Activated CD4-positive, alpha-beta T cell treated with anti-CD3 and anti-CD28 coated beads, Interleukin-2, amount 10 ng/mL, durations not matched to agents 24 days and 14 days (primary cell): ENCODE measurements at regions of chr3 and their contacts with region 1.

Region 1: DNA sequence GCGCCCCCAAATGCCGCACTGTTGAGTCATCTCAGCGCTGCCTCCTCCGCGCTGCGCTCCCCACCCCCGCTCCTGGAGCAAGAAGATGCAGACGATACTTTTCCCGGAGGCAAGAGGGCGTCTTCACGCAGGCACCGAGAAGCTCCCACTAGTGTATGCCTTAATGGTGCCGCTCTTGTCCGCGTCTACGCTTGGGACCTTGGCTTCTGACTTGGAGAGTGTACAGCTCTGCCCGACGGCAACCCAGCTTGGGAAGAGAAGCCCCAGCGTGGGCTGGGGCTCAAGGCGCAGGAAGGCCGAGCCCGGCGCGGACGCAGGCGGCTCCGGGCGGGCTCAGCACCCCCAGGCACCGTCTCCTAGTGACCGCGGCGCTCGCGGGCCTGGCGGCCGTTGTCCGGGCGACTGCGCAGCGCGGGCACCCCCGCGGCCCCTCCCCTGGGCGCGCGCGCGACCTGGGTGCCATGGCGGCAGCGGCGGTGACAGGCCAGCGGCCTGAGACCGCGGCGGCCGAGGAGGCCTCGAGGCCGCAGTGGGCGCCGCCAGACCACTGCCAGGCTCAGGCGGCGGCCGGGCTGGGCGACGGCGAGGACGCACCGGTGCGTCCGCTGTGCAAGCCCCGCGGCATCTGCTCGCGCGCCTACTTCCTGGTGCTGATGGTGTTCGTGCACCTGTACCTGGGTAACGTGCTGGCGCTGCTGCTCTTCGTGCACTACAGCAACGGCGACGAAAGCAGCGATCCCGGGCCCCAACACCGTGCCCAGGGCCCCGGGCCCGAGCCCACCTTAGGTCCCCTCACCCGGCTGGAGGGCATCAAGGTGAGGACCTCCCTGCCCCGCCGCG is at the start of gene P4HTM:
- DNase-seq: peak; percentile 91
- H3K4me3 Mint-ChIP-seq: peak within 1 kb of the TSS; percentile 96
- H3K27ac Mint-ChIP-seq: peak within 1 kb of the TSS; percentile 95
- H3K4me1 Mint-ChIP-seq: peaks cover 36% of the 10 kb centered on the region
- H3K27me3 Mint-ChIP-seq: no peaks in the 10 kb centered on the region
- total RNA-seq, gene P4HTM: 33.9 and 38.3 TPM in 2 replicates

Region 2: GRCh38 chr3:48918388-48919214 is 71.4 kb before region 1 on chr3 and contains the start of gene ARIH2:
- intact Hi-C with region 1: loop called (anchors 1 kb)
- DNase-seq: peak; percentile 97
- H3K4me3 Mint-ChIP-seq: peak within 1 kb of the TSS; percentile 91
- H3K27ac Mint-ChIP-seq: peak within 1 kb of the TSS; percentile 97
- H3K4me1 Mint-ChIP-seq: peaks cover 22% of the 10 kb centered on the region
- H3K27me3 Mint-ChIP-seq: no peaks in the 10 kb centered on the region
- total RNA-seq, gene ARIH2: 157 TPM in 2 replicates

Region 3: DNA sequence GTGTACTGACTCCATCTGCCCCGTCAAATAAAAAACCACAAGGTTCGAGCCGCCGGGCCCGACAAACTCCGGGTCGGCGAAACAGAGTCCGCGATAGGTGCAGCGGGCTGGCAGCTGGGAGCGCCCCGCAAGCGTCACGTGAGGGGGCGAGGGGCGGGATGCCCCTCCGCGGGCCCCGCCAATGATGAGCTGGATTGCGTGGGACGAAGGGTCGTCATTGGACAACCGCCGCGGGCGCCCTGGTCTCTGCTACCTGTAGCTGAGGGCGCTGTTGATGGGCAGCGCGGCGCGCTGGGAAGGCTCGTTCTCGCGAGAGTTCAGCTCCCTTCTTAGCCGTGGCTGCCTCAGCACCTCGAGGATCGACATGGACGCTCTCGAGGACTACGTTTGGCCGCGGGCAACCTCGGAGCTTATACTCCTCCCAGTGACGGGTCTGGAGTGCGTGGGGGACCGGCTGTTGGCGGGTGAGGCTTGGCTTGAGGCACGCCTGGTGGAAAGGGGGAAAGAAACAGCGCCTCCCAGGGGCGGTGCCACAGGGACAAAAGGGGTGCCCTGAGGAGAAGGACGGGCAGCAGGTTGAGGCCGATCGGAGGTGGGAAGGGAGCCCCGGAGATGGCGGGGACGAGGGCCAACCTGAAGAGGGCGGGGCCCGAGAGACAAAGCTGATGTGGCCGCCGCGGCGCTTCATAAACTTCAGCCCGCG is 17.2 kb after region 1 on chr3 and contains the start of gene WDR6:
- intact Hi-C with region 1: loop called (anchors 1 kb)
- DNase-seq: peak; percentile 99
- H3K4me3 Mint-ChIP-seq: peak within 1 kb of the TSS; percentile 94
- H3K27ac Mint-ChIP-seq: peak within 1 kb of the TSS; percentile 99
- H3K4me1 Mint-ChIP-seq: peaks cover 27% of the 10 kb centered on the region
- H3K27me3 Mint-ChIP-seq: no peaks in the 10 kb centered on the region
- total RNA-seq, gene WDR6: 141 and 153 TPM in 2 replicates

Region 4: DNA sequence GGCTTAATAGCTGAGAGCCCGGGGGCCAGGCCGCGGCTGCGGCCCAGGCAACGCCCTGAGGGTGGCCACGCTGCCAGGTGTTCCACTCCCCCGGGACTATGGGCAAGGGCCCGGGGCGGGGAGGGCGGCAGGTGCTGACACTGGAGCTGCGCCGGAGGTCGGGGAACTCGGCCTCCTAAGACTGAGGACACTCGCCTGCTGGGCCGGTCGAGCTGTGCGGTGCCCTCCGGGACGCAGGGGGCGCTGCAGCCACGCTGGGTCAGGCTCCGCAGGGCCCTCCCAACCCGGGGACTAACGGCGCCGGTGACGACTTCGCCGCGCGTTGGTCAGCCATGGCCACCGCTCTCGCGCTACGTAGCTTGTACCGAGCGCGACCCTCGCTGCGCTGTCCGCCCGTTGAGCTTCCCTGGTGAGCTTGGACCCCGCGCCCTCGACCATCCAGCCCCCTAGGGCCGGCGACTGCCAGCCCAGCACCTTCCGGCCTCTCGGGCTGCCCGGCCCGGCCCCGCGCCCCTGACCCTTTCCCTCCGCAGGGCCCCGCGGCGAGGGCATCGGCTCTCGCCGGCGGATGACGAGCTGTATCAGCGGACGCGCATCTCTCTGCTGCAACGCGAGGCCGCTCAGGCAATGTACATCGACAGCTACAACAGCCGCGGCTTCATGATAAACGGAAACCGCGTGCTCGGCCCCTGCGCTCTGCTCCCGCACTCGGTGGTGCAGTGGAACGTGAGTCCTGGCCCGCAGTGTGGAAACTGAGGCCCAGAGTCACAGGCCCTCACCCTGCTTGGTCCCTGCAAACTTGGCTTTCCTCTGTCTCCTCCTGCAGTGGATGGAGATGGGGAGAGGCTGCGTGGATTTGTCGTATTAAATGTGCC is 32.0 kb after region 1 on chr3 and contains the start of gene NDUFAF3:
- intact Hi-C with region 1: loop called (anchors 1 kb)
- DNase-seq: peak; percentile 98
- H3K4me3 Mint-ChIP-seq: peak within 1 kb of the TSS; percentile 96
- H3K27ac Mint-ChIP-seq: peak within 1 kb of the TSS; percentile 98
- H3K4me1 Mint-ChIP-seq: peaks cover 35% of the 10 kb centered on the region
- H3K27me3 Mint-ChIP-seq: no peaks in the 10 kb centered on the region
- total RNA-seq, gene NDUFAF3: 123 and 126 TPM in 2 replicates

Region 5: DNA sequence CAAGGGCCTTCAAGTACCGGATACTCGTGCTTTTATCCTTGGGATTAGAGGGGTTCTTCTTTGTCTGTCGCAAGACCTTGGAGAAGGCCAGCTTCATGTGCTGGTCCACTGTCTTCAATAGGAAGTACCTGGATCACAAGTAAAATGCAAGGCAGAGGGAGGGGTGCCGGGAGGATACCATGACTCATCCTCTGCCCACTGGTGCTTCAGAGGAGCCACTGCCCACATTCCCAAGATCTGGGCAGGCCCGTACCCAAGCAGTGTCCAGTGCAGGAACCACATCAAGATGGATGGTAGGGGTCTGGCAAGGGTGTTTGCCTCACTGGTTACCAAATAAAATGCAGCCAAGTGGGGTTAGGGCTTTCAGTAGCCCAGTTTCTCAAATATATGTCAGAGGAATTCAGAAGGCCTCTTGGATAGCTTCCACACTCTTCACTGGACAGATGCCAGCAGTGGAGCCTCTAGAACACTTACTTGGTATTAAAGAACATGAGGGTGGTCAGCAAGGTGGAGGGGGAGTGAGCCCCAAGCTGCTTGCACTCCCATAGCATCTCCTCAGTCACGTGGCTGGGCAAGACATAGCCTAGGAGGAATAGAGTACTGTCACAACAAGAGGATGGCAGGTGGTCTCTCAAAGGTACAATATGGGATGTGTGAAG is 42.8 kb after region 1 on chr3:
- intact Hi-C with region 1: no loop called
- DNase-seq: no peak
- H3K4me3 Mint-ChIP-seq: no peak overlapping the region
- H3K27ac Mint-ChIP-seq: no peak overlapping the region
- H3K4me1 Mint-ChIP-seq: peaks cover 17% of the 10 kb centered on the region
- H3K27me3 Mint-ChIP-seq: no peaks in the 10 kb centered on the region

Region 6: DNA sequence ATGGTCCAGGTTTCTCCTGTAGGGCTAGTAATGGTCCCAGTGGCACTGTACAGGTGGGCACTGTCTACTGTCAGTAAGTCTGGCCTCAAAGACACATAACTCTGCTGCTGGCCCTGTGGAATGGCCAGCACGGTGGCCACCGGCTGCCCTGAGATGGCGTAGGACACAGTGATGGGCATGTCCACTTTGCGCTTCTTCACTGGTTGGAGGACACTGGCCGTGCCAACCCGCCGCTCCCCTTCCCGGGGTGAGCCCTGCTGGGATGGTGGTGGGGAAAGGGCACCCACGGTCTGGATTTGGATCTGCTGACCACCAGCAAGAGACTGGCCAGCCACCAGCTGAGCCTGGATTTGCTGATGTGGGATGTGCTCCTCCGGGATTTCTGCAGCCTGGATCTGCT is 67.3 kb after region 1 on chr3:
- intact Hi-C with region 1: no loop called
- DNase-seq: no peak
- H3K4me3 Mint-ChIP-seq: no peak overlapping the region
- H3K27ac Mint-ChIP-seq: no peak overlapping the region
- H3K4me1 Mint-ChIP-seq: peaks cover 2% of the 10 kb centered on the region
- H3K27me3 Mint-ChIP-seq: no peaks in the 10 kb centered on the region

Region 7: DNA sequence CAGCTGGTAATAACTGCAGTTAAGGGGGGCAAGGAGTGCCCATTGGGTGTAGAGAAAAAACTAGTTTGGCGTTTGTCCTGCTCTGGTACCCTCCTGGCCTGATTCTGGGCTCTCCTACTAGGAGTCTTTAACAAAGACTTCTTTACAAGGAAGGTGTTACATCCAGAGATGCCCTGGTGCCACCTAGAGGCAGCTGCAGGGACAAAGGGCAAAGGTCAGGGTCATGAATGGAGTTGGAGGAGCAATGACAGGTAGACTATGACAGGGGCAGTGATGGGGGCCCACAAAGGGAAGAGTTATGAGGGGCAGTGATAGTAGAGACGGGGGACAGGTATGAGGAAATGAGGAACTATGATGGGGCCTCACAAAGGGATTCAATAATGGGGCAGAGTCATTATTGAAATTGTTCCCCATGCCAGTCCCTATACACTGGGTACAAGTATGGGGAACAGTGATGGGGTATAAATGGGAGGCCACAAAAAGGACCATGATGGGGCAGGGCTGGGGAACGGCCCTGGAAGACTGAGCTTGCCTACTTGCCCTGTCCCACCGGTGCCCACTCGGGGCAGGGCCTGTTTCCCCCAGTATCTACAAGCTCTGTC is 168.2 kb after region 1 on chr3:
- intact Hi-C with region 1: loop called (anchors 2 kb)
- DNase-seq: peak; percentile 88
- H3K4me3 Mint-ChIP-seq: no peak overlapping the region
- H3K27ac Mint-ChIP-seq: no peak overlapping the region
- H3K4me1 Mint-ChIP-seq: peaks cover 3% of the 10 kb centered on the region
- H3K27me3 Mint-ChIP-seq: no peaks in the 10 kb centered on the region